ENCODE measurements at regions of chr6 and their contacts with region 1.

Region 1: DNA sequence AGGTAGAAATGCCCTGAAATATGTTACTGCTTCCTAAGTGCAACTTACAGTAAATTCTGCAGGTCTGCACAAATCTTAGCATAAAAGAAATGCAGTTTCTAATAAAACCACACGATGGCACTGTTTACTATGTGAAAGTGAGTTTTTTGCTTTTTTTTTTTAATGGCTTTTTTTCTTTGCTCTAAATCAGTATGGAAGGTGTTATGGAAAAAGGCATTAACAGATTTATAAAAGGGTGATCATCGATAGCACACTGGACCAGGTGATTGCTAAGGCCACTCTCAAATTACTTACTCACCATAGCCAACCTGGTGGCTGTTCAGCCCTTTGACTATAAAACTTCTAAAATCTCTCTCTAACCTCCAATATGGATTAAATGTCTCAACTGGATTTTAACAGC is 45.8 kb downstream of the AHI1 start:
- DNase-seq: peak; percentile 68
- H3K4me3 ChIP-seq: no peak overlapping the region
- H3K27ac ChIP-seq: no peak overlapping the region
- H3K4me1 ChIP-seq: no peaks in the 10 kb centered on the region
- CTCF ChIP-seq: peak; percentile 96

Region 2: DNA sequence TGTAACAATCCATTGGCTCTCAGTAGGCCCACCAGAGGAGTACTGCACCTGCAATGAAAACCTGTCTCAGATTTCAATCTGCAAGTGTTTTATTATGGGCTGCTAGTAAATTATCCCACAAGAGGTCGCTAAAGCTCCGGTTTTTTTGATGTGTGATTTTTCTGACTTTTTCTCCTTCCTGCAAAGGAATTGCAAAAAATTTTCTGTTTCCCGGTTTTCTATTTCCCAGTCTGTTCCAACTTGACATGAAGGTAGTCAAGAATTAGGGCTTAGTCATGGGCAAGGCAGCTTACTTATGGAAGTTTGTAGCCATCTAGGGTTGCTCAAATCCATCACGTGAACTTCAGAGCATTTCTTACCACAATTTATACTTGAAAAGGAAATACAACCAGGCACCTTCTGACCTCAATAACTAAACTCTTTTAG is 84.3 kb after region 1 on chr6:
- CTCF ChIA-PET with region 1: no interaction called
- POLR2A ChIA-PET with region 1: interaction called, 3 read pairs
- intact Hi-C with region 1: loop called (anchors 1 kb)
- DNase-seq: peak; percentile 52
- H3K4me3 ChIP-seq: no peak overlapping the region
- H3K27ac ChIP-seq: no peak overlapping the region
- H3K4me1 ChIP-seq: no peaks in the 10 kb centered on the region
- CTCF ChIP-seq: peak; percentile 90

Region 3: DNA sequence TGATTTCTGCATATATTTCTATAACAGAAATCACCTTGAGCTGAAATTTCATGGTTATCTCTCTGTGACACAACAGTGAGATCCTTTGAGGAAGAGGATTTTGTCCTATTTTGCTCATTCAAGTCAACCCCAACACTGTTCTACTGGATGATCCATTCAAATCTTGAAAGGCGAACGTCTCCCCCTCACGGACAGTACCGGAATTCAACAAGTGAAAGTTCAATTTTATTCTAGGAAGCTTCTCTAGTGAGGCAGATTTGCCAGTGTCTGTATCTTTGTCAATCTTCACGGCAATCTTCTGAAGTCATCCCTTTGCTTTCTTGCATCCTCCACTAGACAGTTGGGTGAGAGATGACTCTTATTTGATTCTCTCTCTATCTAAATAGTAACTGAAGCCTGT is 308.1 kb after region 1 on chr6:
- CTCF ChIA-PET with region 1: no interaction called
- POLR2A ChIA-PET with region 1: no interaction called
- intact Hi-C with region 1: loop called (anchors 10 kb)
- DNase-seq: peak; percentile 6
- H3K4me3 ChIP-seq: no peak overlapping the region
- H3K27ac ChIP-seq: no peak overlapping the region
- H3K4me1 ChIP-seq: no peaks in the 10 kb centered on the region
- CTCF ChIP-seq: peak; percentile 51

Region 4: GRCh38 chr6:135909737-135910387 is 458.2 kb after region 1 on chr6:
- CTCF ChIA-PET with region 1: interaction called, 3 read pairs
- POLR2A ChIA-PET with region 1: no interaction called
- intact Hi-C with region 1: loop called (anchors 5 kb)
- DNase-seq: peak; percentile 59
- H3K4me3 ChIP-seq: no peak overlapping the region
- H3K27ac ChIP-seq: no peak overlapping the region
- H3K4me1 ChIP-seq: no peaks in the 10 kb centered on the region
- CTCF ChIP-seq: peak; percentile 84

Measured in OCI-LY7 (cell line).